Cardiac septum (tissue), 1 donor: ENCODE measurements at regions of chr1 and their contacts with region 1.

Region 1: DNA sequence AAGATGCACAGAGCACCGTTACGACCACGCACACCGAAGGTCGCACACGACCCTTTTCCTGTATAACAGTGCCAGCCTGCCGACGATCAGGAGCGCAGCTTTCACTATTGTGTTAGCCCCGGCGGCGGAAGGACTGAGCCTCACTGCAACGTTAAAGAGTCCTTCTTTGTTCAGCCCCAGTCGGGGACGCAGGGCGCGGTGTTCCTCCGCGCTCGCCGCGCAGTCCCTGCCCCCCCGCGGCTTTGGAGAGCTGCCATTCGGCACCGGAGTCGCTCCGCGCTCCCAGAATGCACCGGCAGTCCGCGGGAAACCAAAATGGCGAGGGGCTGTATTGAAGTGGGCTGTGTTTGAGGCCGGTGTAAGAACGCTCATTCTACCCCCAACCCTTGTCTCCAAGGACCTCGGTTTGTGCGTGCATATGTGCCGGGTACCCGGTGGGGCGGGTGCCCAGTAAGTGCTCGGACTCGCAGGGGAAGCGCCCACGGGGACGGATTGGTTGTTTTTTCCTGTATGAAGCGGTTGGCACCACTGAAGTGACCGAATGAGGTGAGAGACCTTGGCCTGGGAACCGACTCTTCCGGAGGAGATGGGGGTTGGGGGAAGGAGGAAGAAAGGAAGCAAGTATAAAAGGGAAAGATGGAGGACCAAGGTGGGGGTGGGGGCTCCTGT is at the start of gene MTF2:
- DNase-seq: peak; percentile 97
- total RNA-seq, gene MTF2: 7.0 TPM

Region 2: DNA sequence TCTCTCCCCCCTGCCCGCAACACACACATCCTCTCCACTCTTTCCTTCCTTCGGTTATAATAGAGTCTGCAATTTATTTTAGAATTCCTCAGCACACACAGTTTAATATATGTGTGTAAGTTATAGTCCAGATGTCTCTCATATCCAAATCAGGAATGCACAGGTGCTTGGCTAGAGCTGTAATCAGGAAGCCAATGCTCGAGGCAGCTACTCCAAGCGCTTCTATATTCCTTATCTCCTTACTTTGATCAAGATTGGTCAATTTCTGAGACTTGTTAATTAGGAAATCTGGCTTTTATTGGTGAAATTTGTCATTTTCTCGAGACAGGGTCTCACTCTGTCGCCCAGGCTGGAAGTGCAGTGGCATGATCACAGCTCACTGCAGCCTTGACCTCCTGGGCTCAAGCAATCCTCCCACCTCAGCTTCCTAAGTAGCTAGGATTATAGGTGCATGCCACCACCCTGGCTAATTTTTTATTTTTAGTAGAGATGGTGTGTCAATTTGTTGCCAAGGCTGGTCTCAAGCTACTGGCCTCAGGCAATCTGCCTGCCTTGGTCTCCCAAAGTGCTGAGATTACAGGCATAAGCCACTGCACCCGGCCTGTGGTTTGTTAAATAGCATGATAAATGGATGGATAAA is 219.6 kb before region 1 on chr1:
- intact Hi-C with region 1: no loop called
- DNase-seq: no peak

Region 3: DNA sequence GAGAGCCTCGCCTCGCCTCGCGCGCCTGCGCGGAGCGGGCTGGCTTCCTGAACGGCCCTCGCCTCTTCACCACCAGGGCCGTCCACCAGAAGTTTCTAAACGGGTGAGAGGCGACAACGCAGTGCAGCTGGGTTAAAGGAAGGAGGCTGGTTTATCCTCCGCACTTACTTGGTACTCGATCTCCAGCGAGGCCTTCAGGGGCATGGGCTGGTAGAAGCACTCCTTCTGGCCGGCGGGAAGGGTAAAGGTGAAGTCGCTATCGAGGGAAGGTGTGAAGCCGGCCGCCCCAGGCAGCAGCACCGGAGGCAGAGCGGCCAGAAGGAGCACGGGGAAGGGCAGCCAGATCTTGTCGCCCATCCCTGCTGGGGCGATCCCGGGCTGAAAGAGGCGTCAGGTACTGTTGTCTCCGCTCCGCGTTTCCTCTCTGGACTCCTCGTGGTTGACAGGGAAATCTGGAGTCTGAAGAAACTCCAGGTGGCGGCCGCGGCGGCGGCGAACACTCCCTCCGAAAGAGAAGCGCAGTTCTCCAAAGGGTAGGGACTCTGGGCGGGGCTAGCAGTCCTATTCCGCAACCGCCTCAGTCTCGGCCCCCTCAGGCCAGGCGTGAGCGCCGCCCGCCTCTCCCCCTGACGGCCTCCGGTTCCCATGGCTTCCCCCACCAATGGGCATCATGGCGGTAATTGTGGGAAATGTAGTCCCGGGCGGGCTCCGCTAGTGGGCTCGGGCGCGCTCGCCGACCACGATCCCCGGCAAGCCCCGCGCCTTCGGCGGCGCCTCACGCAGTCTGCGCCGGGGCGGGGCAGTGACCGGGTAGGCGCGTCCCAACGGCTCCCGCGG is 101.0 kb after region 1 on chr1 and contains the start of gene TMED5:
- intact Hi-C with region 1: loop called (anchors 1 kb)
- DNase-seq: peak; percentile 99
- total RNA-seq, gene TMED5: 42.2 TPM

Region 4: DNA sequence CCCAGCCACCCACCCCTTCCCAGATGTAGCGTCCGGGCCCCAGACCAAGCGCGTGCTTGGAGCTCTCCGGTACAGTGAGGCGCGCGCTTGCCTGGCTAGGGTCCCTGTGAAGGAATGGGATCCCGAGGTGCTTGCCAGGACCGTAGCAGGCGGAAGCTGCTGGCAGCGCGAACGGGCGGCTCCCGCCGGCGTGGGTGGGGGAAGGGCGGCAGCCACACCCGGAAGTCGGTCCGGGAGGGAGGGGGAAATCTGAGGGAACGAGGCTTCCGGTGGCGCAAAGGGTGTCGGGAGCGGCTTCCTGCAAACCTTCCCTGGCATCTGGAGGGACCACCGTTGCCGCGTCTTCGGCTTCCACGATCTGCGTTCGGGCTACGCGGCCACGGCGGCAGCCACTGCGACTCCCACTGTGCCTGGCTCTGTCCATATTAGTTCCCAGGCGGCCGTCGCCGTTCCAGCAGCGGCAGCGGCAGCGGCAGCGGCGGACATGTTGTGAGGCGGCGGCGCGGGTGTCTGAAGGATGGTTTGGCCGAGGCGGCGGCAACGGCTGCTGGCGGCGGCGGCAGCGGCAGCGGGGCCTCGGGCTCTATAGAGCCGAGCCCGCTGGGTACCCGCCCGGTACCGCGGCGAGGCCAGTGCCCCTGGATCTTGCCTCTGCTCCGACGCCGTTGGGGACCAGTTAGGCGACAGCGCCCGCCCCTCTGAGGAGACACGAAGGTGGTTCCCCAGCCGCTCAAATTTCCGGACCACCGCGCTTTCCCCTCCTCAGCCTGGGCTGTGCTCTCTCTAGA is 266.7 kb after region 1 on chr1 and contains the start of gene DR1:
- intact Hi-C with region 1: loop called (anchors 5 kb)
- DNase-seq: peak; percentile 98
- total RNA-seq, gene DR1: 41.2 TPM